H1 (cell line): ENCODE measurements at regions of chr5 and their contacts with region 1.

Region 1: GRCh38 chr5:150511578-150512367 is 3.8 kb downstream of the NDST1 start:
- DNase-seq: no peak
- H3K4me3 ChIP-seq: peak overlapping the region in 1 of 4 experiments; percentile 4; a peak in 1 of 8 replicates
- H3K27ac ChIP-seq: 0 out of 2 replicates have a peak overlapping the region, but pooled peaks have one; percentile 26
- H3K4me1 ChIP-seq: peaks cover 21 to 41% (median 30%) of the 10 kb centered on the region in 4 experiments
- H3K27me3 ChIP-seq: no peaks in the 10 kb centered on the region
- CTCF ChIP-seq: no peak
- EP300 ChIP-seq: no peak; a peak in 1 of 3 replicates
- POLR2A ChIP-seq: no peak
- RAD21 ChIP-seq: 0 out of 4 replicates have a peak, but pooled peaks of 1 of the 2 experiments have one; percentile 3

Region 2: DNA sequence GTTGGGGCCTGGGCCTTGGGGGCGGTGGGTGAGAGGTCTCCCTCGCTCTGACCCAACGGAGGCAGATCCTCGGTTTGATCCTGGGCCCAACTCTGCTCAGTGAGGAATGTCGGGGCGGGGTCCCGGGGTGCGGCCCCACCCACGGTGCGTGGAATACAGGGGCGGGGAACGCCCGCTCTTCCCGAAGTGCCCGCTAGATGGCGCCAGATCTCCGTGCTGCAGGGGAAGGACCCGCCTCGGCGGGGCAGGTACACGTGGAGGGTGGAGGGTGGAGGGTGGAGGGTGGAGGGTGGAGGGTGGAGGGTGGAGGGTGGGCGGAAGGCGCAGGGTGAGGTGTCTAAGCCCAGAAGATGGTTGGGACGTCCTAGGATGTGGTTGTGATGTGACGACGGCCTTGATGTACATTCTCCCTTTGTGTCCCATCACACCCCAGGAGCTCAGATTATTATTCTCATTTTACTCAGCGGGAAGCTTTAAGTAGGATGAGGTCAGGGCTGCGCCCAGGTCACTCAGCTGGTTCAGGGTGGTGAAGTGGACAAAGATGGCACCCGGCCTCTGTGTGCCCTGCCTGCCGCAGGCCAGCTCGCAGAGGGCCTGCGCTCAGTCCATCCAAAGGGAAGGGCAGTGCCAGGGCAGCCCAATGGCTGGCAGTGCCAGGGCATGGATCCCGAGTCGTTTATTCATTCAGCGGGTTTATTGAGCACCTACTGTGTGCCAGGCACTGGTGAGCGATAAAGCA is 52.8 kb before region 1 on chr5:
- CTCF ChIA-PET with region 1: interaction called, 62 read pairs
- POLR2A ChIA-PET with region 1: interaction called, 4 read pairs
- DNase-seq: peak in 1 of 2 experiments; percentile 99
- H3K4me3 ChIP-seq: peak overlapping the region in 1 of 4 experiments; percentile 47; a peak in 2 of 8 replicates
- H3K27ac ChIP-seq: no peak overlapping the region
- H3K4me1 ChIP-seq: peaks cover 4 to 20% (median 9%) of the 10 kb centered on the region in 4 experiments
- H3K27me3 ChIP-seq: no peaks in the 10 kb centered on the region
- CTCF ChIP-seq: peak; percentile 69 to 92 (median 89)
- EP300 ChIP-seq: 0 out of 3 replicates have a peak, but pooled peaks of 1 of the 2 experiments have one; percentile 3
- POLR2A ChIP-seq: no peak
- RAD21 ChIP-seq: peak; percentile 89 to 91

Region 3: GRCh38 chr5:150464554-150465012 is 47.2 kb before region 1 on chr5:
- CTCF ChIA-PET with region 1: interaction called, 62 read pairs
- POLR2A ChIA-PET with region 1: interaction called, 4 read pairs
- DNase-seq: peak in 1 of 2 experiments; percentile 59
- H3K4me3 ChIP-seq: no peak overlapping the region
- H3K27ac ChIP-seq: no peak overlapping the region
- H3K4me1 ChIP-seq: peaks cover 3 to 24% (median 14%) of the 10 kb centered on the region in 4 experiments
- H3K27me3 ChIP-seq: no peaks in the 10 kb centered on the region
- CTCF ChIP-seq: no peak
- EP300 ChIP-seq: no peak
- POLR2A ChIP-seq: peak in 1 of 2 experiments; percentile 48; a peak in 2 of 3 replicates
- RAD21 ChIP-seq: no peak

Region 4: GRCh38 chr5:150473673-150474358 is 38.0 kb before region 1 on chr5:
- CTCF ChIA-PET with region 1: interaction called, 571 read pairs
- POLR2A ChIA-PET with region 1: no interaction called
- DNase-seq: peak in 1 of 2 experiments; percentile 82
- H3K4me3 ChIP-seq: no peak overlapping the region
- H3K27ac ChIP-seq: no peak overlapping the region
- H3K4me1 ChIP-seq: peaks cover 0 to 18% (median 5%) of the 10 kb centered on the region in 4 experiments; a peak in 6 of 7 replicates
- H3K27me3 ChIP-seq: no peaks in the 10 kb centered on the region
- CTCF ChIP-seq: no peak
- EP300 ChIP-seq: no peak
- POLR2A ChIP-seq: no peak
- RAD21 ChIP-seq: no peak

Region 5: DNA sequence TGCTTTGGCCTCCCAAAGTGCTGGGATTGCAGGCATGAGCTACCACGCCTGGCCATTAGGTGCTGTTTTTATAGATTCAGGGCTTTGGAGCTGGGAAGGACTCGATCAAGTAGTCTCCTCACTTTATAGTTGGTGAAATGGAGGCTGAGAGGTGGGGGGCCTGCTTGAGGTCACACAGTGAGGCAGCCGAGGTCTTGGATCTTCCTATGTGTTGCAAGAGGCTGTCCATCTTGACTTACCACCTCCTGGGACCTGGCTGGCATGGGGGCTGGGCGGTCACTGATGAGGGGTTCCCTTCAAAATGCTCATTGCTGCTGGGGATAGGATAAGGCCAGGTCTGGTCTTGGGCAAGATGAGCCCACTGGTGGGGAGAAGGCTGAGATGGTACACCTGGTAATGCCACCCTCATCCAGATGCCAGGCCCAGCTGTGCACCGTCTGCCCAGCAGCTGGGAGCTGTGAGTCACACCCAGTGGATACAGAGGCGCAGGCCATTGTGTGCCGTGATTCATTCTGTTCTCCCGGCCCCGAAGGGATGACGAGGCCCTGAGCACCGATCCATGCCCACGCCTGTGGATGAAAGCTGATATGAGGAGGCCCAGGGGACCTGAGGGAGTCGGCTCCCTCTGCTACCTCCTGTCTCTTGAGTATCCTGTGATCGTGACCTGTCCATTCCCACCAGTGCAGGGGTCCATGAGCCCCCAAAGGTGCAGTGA is 14.3 kb before region 1 on chr5:
- CTCF ChIA-PET with region 1: interaction called, 571 read pairs
- POLR2A ChIA-PET with region 1: interaction called, 31 read pairs
- DNase-seq: no peak
- H3K4me3 ChIP-seq: no peak overlapping the region
- H3K27ac ChIP-seq: peak overlapping the region; percentile 25; the same call in 1 of the 2 replicates
- H3K4me1 ChIP-seq: peaks cover 21 to 28% (median 27%) of the 10 kb centered on the region in 4 experiments
- H3K27me3 ChIP-seq: no peaks in the 10 kb centered on the region
- CTCF ChIP-seq: no peak
- EP300 ChIP-seq: no peak
- POLR2A ChIP-seq: no peak
- RAD21 ChIP-seq: no peak

Region 6: DNA sequence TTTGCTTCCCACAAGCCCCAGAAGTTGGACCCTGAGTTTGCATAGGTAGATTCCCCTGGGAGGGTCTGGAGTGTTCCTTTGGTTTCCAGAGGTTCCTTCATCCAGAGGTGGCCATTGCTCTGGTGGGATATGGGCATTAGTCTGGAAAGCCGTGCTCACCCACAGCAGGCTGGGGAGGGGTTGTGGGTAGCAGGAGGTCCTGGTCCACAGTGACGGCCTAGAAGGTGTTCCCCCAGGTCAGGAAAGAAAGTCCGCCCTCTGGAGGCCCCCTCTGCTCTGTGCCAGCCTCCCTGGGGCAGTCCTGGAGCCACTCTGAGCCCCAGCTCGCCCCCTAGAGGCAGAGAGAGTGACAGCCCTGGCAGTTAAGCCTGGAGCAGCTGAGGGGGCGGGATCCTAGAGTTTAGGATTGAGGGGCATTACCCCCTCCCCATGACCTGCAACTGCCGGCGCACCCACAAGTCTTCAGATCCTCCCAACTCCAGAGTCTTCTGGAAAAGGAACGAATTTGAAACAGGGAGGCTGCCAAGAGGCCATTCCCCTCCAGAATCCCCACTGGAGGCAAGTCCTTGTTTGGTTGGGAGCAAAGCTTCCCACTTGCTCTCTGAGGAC is 32.9 kb after region 1 on chr5:
- CTCF ChIA-PET with region 1: interaction called, 15 read pairs
- POLR2A ChIA-PET with region 1: no interaction called
- DNase-seq: peak; percentile 67 to 97
- H3K4me3 ChIP-seq: no peak overlapping the region
- H3K27ac ChIP-seq: 0 out of 2 replicates have a peak overlapping the region, but pooled peaks have one; percentile 14
- H3K4me1 ChIP-seq: no peaks in the 10 kb centered on the region; a peak in 1 of 7 replicates
- H3K27me3 ChIP-seq: no peaks in the 10 kb centered on the region
- CTCF ChIP-seq: peak; percentile 99 to 100 (median 99)
- EP300 ChIP-seq: no peak
- POLR2A ChIP-seq: 0 out of 3 replicates have a peak, but pooled peaks of 1 of the 2 experiments have one; percentile 30
- RAD21 ChIP-seq: peak; percentile 81 to 89

Region 7: GRCh38 chr5:150700594-150701293 is 189.0 kb after region 1 on chr5 and contains the start of gene RBM22:
- CTCF ChIA-PET with region 1: no interaction called
- POLR2A ChIA-PET with region 1: no interaction called
- DNase-seq: peak; percentile 76 to 94
- H3K4me3 ChIP-seq: peak within 1 kb of the TSS; percentile 85 to 96 (median 90)
- H3K27ac ChIP-seq: peak within 1 kb of the TSS; percentile 99
- H3K4me1 ChIP-seq: peaks cover 0 to 7% (median 2%) of the 10 kb centered on the region in 4 experiments; a peak in 4 of 7 replicates
- H3K27me3 ChIP-seq: no peaks in the 10 kb centered on the region
- CTCF ChIP-seq: peak; percentile 25 to 49 (median 39)
- EP300 ChIP-seq: peak in 1 of 2 experiments; percentile 81; a peak in 2 of 3 replicates
- POLR2A ChIP-seq: peak; percentile 89 to 97
- RAD21 ChIP-seq: no peak; a peak in 1 of 4 replicates
- total RNA-seq, gene RBM22: 33.9 and 34.0 TPM in 2 replicates